ENCODE measurements at regions of chr18 and their contacts with region 1.

Region 1: DNA sequence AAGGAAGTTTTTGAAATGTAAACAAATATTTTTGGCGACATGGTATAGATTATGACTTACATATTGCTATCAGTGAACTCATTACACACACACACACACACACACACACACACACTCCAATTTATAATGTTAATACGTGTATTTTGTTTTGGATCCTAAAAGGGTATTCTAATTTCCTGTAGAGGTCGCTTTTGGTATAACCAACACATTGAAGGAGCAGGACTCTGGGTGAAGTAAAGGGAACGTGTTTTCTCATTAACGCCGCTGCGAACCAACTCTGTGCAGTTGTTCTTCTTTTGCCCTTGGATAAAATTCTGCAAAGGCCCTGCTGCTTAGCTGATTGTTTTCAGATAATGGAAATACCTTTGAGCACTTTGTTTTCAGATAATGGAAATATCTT is 190.4 kb downstream of the PMAIP1 start:
- DNase-seq: no peak
- H3K4me3 Mint-ChIP-seq: no peak overlapping the region
- H3K27ac Mint-ChIP-seq: no peak overlapping the region
- H3K4me1 Mint-ChIP-seq: no peaks in the 10 kb centered on the region
- H3K27me3 Mint-ChIP-seq: peaks cover 5% of the 10 kb centered on the region

Region 2: DNA sequence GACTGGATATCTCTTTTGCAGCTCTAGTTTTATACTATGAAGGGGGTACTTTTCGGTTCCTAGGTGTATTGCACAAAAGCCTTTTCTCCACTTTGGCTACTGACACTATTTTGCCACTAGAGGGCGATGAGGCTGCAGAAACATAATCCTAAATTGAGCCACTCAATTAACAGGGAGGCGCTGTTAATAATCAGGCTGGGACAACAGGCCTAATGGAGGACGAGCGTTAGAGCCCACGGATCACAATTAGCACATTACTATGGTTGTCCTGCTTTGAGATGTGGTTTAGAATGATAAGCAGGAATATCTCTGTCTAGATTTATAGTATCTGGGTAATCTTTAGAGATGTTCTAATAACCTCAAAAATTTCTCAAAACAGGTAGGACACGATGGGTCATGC is 252.6 kb before region 1 on chr18:
- intact Hi-C with region 1: loop called (anchors 10 kb)
- DNase-seq: peak; percentile 34
- H3K4me3 Mint-ChIP-seq: no peak overlapping the region
- H3K27ac Mint-ChIP-seq: no peak overlapping the region
- H3K4me1 Mint-ChIP-seq: peaks cover 20% of the 10 kb centered on the region
- H3K27me3 Mint-ChIP-seq: peaks cover 14% of the 10 kb centered on the region

Region 3: GRCh38 chr18:59996370-59996966 is 93.7 kb before region 1 on chr18:
- intact Hi-C with region 1: no loop called
- DNase-seq: no peak
- H3K4me3 Mint-ChIP-seq: no peak overlapping the region
- H3K27ac Mint-ChIP-seq: no peak overlapping the region
- H3K4me1 Mint-ChIP-seq: no peaks in the 10 kb centered on the region
- H3K27me3 Mint-ChIP-seq: peaks cover 36% of the 10 kb centered on the region